ENCODE measurements at regions of chr17 and their contacts with region 1.

Region 1: GRCh38 chr17:72677714-72678390 is 414.6 kb downstream of the SLC39A11 start:
- DNase-seq: no peak
- H3K4me3 ChIP-seq: no peak overlapping the region
- H3K27ac ChIP-seq: no peak overlapping the region
- H3K4me1 ChIP-seq: peaks cover 0 to 1% (median 0%) of the 10 kb centered on the region in 4 donors
- H3K27me3 ChIP-seq: no peaks in the 10 kb centered on the region
- CTCF ChIP-seq: no peak
- EP300 ChIP-seq: no peak
- POLR2A ChIP-seq: no peak

Region 2: DNA sequence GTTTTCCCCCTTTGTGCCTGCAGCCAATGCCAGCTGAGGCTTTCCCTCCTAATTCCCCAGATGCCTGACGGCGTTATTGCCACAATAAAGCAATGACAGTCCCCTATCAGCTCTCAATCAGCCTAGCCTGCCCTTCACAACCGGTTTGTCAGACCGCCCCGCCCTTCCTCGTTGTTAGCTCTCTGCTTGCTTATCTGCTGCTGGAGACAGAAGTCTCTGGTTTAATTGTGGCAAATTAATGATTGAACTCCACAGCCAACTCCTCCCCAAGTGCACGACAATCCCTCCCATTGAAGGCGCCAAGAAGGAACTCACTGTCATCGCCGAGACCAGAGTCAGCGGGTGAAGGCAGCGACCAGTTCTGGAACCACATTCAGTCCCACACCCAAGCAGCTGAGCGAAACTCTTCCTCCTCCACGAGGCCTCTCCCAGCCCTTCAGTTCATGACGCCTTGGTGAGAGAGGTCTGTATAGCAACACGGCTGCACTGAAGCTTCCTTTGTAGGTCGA is 59.8 kb before region 1 on chr17:
- in situ Hi-C with region 1: loop called in 1 of 4 experiments (anchors 10 kb)
- intact Hi-C with region 1: no loop called
- DNase-seq: peak; percentile 94
- H3K4me3 ChIP-seq: peak overlapping the region in 1 of 4 donors; percentile 5
- H3K27ac ChIP-seq: peak overlapping the region; percentile 77 to 84 (median 84)
- H3K4me1 ChIP-seq: peaks cover 8 to 57% (median 38%) of the 10 kb centered on the region in 4 donors
- H3K27me3 ChIP-seq: no peaks in the 10 kb centered on the region
- CTCF ChIP-seq: no peak
- EP300 ChIP-seq: no peak
- POLR2A ChIP-seq: peak; percentile 87